Prostate gland (tissue), 2 donors: ENCODE measurements at regions of chr1 and their contacts with region 1.

Region 1: GRCh38 chr1:19390901-19391595 is 78.9 kb downstream of the SLC66A1 start:
- DNase-seq: peak; percentile 63
- H3K4me3 ChIP-seq: no peak overlapping the region
- H3K27ac ChIP-seq: peak overlapping the region; percentile 63 to 82
- H3K4me1 ChIP-seq: peaks cover 23% of the 10 kb centered on the region
- H3K27me3 ChIP-seq: no peaks in the 10 kb centered on the region
- CTCF ChIP-seq: peak; percentile 58 to 91 (median 83)
- POLR2A ChIP-seq: no peak

Region 2: DNA sequence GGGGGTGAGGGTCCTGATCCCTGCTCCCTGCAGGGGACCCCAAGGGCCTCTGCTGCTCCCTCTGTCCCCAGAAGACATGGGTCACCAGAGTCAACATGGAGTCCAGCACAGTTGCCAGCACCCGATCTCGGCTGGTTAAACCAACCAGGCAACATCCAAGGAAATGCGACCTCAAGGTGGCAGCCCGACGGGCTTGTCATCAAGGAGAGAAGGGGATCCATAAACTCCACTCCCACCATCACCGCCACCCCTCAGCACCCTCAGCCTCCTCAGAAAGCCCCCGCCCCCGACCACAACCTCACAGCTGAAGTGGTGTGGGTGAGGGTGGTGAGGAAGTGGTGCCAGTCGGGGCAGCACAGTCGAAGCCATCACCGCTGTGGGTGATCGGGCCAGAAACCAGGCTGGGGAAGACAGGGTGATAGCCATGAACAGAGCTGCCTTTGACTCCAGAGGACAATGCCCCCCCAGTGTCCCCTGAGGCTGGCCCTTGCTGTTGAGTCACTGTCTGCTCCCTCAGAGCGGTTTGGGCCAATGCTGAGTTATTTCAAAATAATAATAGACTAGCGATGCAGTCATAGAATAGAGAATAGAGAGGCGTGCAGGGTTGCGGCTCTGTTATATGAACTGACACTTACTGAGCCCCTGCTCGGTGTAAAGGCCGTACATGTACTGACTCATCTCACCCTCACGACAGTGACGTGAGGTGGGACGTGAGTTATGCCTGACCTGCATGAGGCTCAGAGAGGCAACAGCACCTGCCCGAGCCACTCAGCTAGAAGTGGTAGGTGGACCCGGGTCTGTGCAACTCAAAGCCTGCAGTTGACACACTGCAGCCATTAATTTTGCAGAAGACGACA is 345.8 kb before region 1 on chr1:
- intact Hi-C with region 1: no loop called
- DNase-seq: no peak
- H3K4me3 ChIP-seq: no peak overlapping the region
- H3K27ac ChIP-seq: no peak overlapping the region
- H3K4me1 ChIP-seq: no peaks in the 10 kb centered on the region
- H3K27me3 ChIP-seq: no peaks in the 10 kb centered on the region
- CTCF ChIP-seq: no peak
- POLR2A ChIP-seq: no peak

Region 3: DNA sequence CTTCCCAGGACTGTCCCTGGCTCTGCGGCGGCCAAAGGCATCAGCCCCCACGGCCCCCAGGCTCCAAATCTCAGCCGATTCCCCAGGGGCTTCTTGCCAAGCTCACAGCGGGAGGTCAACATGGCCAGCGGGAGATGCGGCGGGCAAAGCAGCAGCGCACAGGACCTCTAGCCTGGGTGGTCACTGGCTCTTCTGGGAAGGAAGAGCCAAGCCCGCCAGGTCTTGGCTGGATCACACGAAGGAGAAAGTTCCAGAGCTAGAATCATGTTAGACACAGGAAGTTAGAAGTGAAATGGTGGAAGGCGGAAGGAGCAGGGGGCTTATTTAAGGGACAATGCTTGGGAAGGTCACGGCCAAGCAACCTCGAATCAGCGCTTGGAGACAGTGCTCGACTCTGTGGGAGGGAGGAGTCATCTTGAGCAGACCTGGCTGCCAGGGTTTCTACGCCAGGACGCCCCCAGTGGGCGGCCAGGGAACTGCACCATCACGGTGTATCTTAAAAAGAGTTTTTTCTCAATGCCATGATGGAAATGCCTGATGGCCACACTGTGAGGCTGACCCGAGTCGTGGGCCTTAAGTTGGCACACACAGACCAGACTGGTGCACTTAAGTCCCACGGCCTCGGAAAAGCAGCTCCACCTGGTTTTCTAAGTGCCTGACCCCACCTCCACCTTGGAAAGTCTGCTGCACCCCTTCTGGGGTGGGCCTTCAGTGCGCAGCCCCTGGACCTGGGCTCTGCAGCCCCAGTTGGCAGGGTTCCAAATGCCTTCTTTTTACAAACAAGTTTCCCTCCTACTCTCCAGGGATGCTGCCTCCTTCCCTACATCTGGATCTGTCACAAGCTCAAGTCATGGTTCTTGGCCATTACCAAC is 49.6 kb before region 1 on chr1:
- intact Hi-C with region 1: loop called (anchors 2 kb)
- DNase-seq: peak; percentile 43
- H3K4me3 ChIP-seq: no peak overlapping the region
- H3K27ac ChIP-seq: no peak overlapping the region
- H3K4me1 ChIP-seq: no peaks in the 10 kb centered on the region
- H3K27me3 ChIP-seq: no peaks in the 10 kb centered on the region
- CTCF ChIP-seq: peak; percentile 78 to 86 (median 81)
- POLR2A ChIP-seq: no peak

Region 4: GRCh38 chr1:19563324-19564097 is 172.5 kb after region 1 on chr1:
- intact Hi-C with region 1: loop called (anchors 5 kb)
- DNase-seq: peak; percentile 8
- H3K4me3 ChIP-seq: no peak overlapping the region
- H3K27ac ChIP-seq: peak overlapping the region; percentile 56 to 57
- H3K4me1 ChIP-seq: no peaks in the 10 kb centered on the region
- H3K27me3 ChIP-seq: no peaks in the 10 kb centered on the region
- CTCF ChIP-seq: no peak
- POLR2A ChIP-seq: no peak

Region 5: DNA sequence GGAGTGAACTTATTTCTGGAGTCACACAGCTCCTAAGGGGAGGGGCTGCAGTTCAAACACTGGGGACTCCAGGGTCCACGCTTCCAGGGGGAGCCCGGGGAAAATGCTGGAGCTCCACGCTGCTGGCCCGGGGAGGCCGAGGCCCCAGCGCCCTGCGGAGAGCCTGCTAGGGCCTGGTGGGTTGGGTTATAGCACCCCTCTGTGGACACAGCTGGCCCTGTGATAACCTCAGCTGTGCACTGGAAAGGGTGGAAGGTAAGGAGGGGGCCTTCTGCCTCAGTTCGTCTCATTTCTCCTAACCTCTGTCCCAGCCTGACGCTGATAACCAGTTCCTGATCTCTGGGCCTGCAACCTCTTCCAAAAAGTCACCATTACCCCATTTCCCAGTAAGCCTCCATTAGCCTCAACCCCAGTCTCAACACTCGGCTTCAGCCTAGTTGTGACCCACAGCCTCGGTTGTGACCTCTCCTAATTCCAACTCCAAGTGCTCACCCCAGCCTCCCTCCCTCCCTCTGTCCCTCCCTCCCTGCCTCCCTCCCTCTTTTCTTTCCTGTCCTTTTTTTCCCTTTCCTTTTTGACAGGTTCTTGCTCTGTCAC is 260.2 kb after region 1 on chr1:
- intact Hi-C with region 1: loop called (anchors 5 kb)
- DNase-seq: peak; percentile 40
- H3K4me3 ChIP-seq: no peak overlapping the region
- H3K27ac ChIP-seq: peak overlapping the region; percentile 85 to 99
- H3K4me1 ChIP-seq: peaks cover 24% of the 10 kb centered on the region
- H3K27me3 ChIP-seq: no peaks in the 10 kb centered on the region
- CTCF ChIP-seq: peak in 3 of 4 experiments; percentile 49 to 69 (median 69)
- POLR2A ChIP-seq: no peak